ENCODE measurements at regions of chr3 and their contacts with region 1.

Region 1: GRCh38 chr3:73624821-73625665 is at the start of gene PDZRN3:
- DNase-seq: peak; percentile 69
- ATAC-seq: peak; percentile 71
- H3K4me3 Mint-ChIP-seq: peak within 1 kb of the TSS; percentile 75
- H3K27ac Mint-ChIP-seq: no peak within 1 kb of the TSS
- H3K4me1 Mint-ChIP-seq: peaks cover 35% of the 10 kb centered on the region
- H3K27me3 Mint-ChIP-seq: peaks cover 42% of the 10 kb centered on the region
- CTCF ChIP-seq: no peak
- total RNA-seq, gene PDZRN3: 7.1 to 9.5 TPM (median 8.8 TPM) in 3 replicates

Region 2: GRCh38 chr3:73848173-73848906 is 223.3 kb after region 1 on chr3:
- CTCF ChIA-PET with region 1: interaction called, 13 read pairs
- POLR2A ChIA-PET with region 1: no interaction called
- DNase-seq: no peak
- ATAC-seq: peak; percentile 74
- H3K4me3 Mint-ChIP-seq: no peak overlapping the region
- H3K27ac Mint-ChIP-seq: no peak overlapping the region
- H3K4me1 Mint-ChIP-seq: peaks cover 13% of the 10 kb centered on the region
- H3K27me3 Mint-ChIP-seq: no peaks in the 10 kb centered on the region
- CTCF ChIP-seq: peak; percentile 45; the same call in 1 of the 2 replicates

Region 3: DNA sequence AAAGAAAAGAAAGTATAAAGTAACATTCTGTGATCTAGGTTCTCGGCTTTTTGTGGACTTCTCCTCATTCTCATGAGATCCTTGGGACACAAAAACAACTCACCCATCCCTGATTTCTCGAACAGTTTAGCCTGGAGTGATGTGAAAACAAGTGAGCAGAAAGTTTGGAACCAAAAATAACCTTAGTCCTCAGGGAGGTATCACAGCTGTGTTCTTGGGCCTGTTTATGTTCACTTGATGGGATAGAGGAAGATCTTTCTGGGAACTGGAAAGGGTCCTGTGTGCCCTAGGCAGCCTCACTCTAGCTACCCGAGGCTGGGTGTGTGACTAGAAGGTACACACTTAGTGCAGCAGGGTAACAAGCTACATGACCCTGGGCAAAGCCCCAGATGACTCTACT is 308.5 kb after region 1 on chr3:
- CTCF ChIA-PET with region 1: no interaction called
- POLR2A ChIA-PET with region 1: no interaction called
- DNase-seq: no peak
- ATAC-seq: no peak
- H3K4me3 Mint-ChIP-seq: no peak overlapping the region
- H3K27ac Mint-ChIP-seq: no peak overlapping the region
- H3K4me1 Mint-ChIP-seq: no peaks in the 10 kb centered on the region
- H3K27me3 Mint-ChIP-seq: no peaks in the 10 kb centered on the region
- CTCF ChIP-seq: no peak